IMR-90 (cell line): ENCODE measurements at regions of chr7 and their contacts with region 1.

Region 1: GRCh38 chr7:8295638-8296361 is 33.8 kb upstream of the ICA1 start:
- DNase-seq: peak; percentile 74
- ATAC-seq: peak; percentile 93
- H3K4me3 ChIP-seq: no peak overlapping the region
- H3K27ac ChIP-seq: no peak overlapping the region
- H3K4me1 ChIP-seq: no peaks in the 10 kb centered on the region
- H3K27me3 ChIP-seq: no peaks in the 10 kb centered on the region
- CTCF ChIP-seq: peak; percentile 72
- POLR2A ChIP-seq: no peak
- RAD21 ChIP-seq: peak; percentile 72

Region 2: DNA sequence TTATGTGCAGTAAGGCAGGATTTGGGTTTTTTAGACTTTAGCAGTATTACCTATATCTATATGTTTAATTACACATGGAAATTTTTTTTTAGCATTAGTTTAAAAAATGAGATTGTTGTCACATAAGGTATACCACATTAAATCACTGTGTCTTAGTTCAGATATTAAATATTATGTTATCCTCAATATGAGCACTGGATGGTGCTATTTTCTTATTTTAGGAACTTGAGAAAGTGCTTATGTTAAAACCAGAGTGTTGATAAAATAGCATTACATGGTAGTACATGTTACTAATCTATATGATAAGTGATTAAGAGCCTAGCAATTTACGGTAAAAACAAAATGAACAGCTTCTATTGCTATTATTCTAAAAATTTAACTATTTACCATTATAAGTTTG is 700.3 kb before region 1 on chr7:
- CTCF ChIA-PET with region 1: no interaction called
- POLR2A ChIA-PET with region 1: no interaction called
- dilution Hi-C with region 1: no loop called
- in situ Hi-C with region 1: no loop called
- intact Hi-C with region 1: loop called (anchors 10 kb)
- DNase-seq: peak; percentile 33
- ATAC-seq: peak; percentile 65; the same call in 1 of the 2 replicates
- H3K4me3 ChIP-seq: no peak overlapping the region
- H3K27ac ChIP-seq: no peak overlapping the region
- H3K4me1 ChIP-seq: no peaks in the 10 kb centered on the region
- H3K27me3 ChIP-seq: no peaks in the 10 kb centered on the region
- CTCF ChIP-seq: peak; percentile 50
- POLR2A ChIP-seq: no peak
- RAD21 ChIP-seq: peak; percentile 58

Region 3: DNA sequence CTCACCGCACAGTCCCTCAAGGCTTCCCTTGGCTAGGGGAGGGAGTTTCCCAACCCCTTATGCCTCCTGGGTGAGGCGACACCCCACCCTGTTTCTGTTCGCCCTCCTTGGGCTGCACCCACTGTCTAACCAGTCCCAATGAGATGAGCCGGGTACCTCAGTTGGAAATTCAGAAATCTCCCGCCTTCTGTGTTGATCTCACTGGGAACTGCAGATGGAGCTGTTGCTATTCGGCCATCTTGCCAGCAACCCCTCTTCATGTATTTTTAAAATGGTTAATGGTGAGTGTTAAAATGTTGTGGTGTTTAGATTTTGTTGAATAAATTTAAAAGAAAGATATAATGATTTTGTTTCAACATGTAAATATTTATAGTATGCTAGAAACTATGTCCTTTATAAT is 633.3 kb before region 1 on chr7:
- CTCF ChIA-PET with region 1: no interaction called
- POLR2A ChIA-PET with region 1: no interaction called
- dilution Hi-C with region 1: no loop called
- in situ Hi-C with region 1: no loop called
- intact Hi-C with region 1: loop called (anchors 2 kb)
- DNase-seq: peak; percentile 34
- ATAC-seq: peak; percentile 51
- H3K4me3 ChIP-seq: no peak overlapping the region
- H3K27ac ChIP-seq: no peak overlapping the region
- H3K4me1 ChIP-seq: no peaks in the 10 kb centered on the region
- H3K27me3 ChIP-seq: no peaks in the 10 kb centered on the region
- CTCF ChIP-seq: peak; percentile 55
- POLR2A ChIP-seq: no peak
- RAD21 ChIP-seq: peak; percentile 61

Region 4: DNA sequence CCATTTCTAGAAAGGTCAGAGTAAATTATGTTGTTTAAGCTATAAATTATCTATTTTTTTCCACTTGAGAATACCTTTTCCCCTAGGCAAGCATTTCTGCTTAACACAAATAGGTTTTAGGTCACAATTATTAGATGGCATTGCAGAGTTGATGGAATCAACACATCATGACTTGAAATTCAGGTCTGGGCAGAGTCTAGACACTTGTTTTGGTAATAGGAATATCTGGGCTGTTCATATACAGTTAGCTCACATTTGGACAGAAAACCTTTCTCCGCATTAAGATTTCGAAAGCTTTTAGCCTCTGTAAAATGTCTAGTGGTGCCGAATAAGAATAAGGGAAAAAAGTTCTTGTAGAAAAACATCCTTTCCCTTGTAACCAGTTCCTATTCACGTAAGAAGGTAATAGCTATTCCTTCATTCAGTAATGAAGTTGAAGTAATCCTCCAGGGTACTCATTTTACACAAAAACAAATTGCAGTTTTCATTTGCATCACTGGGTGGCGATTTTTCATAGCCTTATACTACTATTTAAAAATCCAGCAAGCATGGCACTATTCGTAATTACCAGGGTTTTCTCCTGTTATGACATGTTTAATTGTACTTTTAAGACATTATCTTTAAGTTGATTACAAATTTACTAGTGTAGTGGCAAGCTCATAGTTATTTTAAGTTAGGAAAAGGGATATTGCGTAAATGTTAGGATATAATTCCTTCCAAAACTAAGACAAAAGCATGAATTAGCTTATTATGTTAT is 614.4 kb before region 1 on chr7:
- CTCF ChIA-PET with region 1: no interaction called
- POLR2A ChIA-PET with region 1: no interaction called
- dilution Hi-C with region 1: no loop called
- in situ Hi-C with region 1: no loop called
- intact Hi-C with region 1: loop called (anchors 5 kb)
- DNase-seq: peak; percentile 61
- ATAC-seq: peak; percentile 89
- H3K4me3 ChIP-seq: no peak overlapping the region
- H3K27ac ChIP-seq: no peak overlapping the region
- H3K4me1 ChIP-seq: no peaks in the 10 kb centered on the region
- H3K27me3 ChIP-seq: no peaks in the 10 kb centered on the region
- CTCF ChIP-seq: peak; percentile 76
- POLR2A ChIP-seq: no peak
- RAD21 ChIP-seq: peak; percentile 78